Left cardiac atrium (tissue), 4 donors: ENCODE measurements at regions of chr11 and their contacts with region 1.

Region 1: DNA sequence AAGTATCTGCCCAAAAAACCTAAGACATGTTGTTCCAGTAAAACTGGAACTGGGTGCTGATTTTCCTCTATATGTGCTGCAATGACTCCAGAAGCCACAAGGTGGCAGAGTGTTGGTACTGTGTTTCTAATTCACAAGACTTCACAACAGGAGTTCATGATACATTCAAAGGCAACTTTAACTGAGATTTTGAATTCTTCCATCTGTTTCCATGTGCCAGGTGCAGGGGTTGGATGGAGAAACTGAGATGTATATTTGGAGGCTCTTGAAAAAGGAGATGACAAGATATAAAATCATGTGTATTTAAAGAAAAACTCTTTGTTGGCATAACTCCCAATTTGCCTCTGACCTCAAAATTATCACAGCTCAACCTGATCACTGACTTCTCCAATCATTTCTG is 1098.6 kb upstream of the CCDC90B start:
- DNase-seq: peak; percentile 38
- ATAC-seq: no peak

Region 2: GRCh38 chr11:83759148-83759547 is 625.6 kb before region 1 on chr11:
- intact Hi-C with region 1: no loop called
- DNase-seq: no peak
- ATAC-seq: no peak

Region 3: DNA sequence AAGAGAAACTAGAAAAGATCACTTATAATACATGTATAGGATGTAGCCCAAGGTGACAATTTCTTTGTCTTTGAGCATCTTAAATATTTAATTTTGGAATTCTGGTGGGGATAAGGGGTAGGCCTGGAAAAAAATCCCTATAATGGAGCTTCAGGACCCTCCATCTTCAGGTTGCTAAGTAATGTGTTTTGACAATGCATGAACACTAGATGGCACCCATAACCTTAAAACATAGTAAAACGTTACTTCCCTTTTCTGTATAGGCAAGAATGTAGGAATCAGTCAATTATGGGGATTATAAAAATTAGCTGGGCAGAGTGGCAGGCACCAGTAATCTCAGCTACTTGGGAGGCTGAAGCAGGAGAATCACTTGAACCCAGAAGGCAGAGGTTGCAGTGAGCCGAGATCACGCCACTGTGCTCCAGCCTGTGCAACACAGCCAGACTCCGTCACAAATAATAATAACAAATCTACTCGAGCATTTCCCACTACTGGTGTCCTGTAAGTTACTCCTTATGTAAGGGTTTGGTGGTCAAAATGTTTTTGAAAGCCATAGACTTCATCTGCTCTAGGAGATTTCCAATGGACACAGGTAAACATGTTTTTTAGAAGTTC is 556.7 kb before region 1 on chr11:
- intact Hi-C with region 1: loop called (anchors 10 kb)
- DNase-seq: no peak
- ATAC-seq: peak in 1 of 2 donors; percentile 67

Region 4: GRCh38 chr11:83836883-83837654 is 547.7 kb before region 1 on chr11:
- intact Hi-C with region 1: loop called in 1 of 2 experiments (anchors 10 kb)
- DNase-seq: no peak
- ATAC-seq: peak; percentile 72 to 94

Region 5: GRCh38 chr11:84437071-84437980 is 52.6 kb after region 1 on chr11:
- intact Hi-C with region 1: no loop called
- DNase-seq: peak; percentile 26
- ATAC-seq: peak; percentile 8 to 69

Region 6: GRCh38 chr11:84524422-84525051 is 139.8 kb after region 1 on chr11:
- intact Hi-C with region 1: loop called (anchors 5 to 10 kb)
- DNase-seq: no peak
- ATAC-seq: no peak